Activated T-helper 2 cell treated with anti-CD3 and anti-CD28 coated beads, Interferon-gamma antibody, Interleukin-2, Interleukin-4, amounts not matched to agents 10 μg/mL and 5 μg/mL and 100 μg/mL, durations not matched to agents 14 hours and 24 hours and 36 hours (primary cell): ENCODE measurements at regions of chr14 and their contacts with region 1.

Region 1: DNA sequence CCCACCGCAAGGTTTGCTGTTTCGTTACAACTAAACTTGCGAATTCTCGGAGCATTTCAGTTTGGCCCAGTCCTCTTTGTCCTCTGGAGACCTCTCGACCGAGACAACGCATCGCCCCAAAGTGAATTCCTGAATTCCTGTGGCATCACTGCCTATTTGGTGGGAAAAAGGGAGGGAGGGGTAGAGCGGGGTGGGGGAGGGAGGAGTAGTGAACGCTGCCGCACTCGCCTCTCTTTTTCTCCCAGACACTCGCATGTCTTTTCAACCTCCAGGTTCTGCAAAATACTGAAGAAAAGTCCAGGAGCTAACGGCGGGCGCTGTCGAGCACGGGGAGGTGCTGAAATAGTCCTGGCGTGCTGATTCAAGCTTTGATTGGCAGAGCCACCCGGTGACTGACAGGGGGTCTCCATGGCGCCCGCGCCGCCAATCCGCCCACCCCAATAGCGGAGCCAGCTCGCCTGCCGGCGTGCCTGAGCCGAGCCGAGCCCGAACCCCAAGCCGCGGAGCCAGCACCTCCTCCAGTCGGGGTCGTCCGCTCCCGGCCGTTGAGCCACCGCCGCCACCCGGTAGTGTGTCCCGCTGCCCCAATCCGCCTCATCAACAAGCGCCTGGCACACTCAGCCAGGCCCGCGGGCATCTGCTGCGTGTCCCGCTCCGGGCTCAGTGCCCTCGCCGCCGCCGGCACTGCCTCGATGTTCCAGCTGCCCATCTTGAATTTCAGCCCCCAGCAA is at the start of gene SIX6:
- DNase-seq: no peak
- H3K4me3 Mint-ChIP-seq: no peak within 1 kb of the TSS
- H3K27ac Mint-ChIP-seq: peak within 1 kb of the TSS; percentile 12
- H3K4me1 Mint-ChIP-seq: no peaks in the 10 kb centered on the region
- H3K27me3 Mint-ChIP-seq: peaks cover 82% of the 10 kb centered on the region
- total RNA-seq, gene SIX6: not detected in 2 replicates

Region 2: DNA sequence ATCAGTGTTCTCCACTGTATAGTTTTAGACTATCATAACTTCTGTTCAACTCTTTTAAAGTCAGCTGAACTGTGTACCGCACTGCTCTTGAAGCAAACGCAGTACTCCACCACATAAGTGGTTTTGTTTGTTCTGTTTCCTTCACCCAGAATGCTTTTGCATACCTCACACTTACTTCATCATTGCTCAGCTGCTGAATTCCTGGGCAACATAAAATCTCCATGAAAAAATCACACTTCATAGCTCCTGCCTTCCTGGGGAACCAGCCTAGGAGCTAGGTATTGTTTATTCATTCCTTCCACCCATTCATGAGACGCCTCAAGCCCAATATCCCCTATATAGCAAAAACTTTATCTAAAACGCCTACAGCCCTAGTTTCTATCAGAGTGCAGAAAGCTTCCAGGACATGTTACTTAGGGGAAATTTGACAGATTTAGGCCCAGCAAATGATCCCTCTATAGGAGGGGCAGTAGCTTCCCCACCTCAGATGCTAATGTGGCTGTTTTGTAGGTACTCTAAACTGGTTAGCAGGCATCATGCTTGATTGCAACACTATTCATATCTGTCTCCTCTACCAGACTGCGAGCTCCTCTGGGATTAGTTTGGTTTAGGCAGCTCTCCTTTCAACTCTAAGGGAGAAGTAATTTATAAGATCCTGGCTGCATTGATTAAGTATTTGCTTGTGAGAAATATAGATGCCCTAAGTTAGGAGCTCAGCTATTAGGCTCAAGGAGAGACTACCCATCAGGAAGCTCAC is 544.4 kb before region 1 on chr14:
- intact Hi-C with region 1: no loop called
- DNase-seq: no peak
- H3K4me3 Mint-ChIP-seq: no peak overlapping the region
- H3K27ac Mint-ChIP-seq: no peak overlapping the region
- H3K4me1 Mint-ChIP-seq: peaks cover 13% of the 10 kb centered on the region
- H3K27me3 Mint-ChIP-seq: peaks cover 9% of the 10 kb centered on the region

Region 3: DNA sequence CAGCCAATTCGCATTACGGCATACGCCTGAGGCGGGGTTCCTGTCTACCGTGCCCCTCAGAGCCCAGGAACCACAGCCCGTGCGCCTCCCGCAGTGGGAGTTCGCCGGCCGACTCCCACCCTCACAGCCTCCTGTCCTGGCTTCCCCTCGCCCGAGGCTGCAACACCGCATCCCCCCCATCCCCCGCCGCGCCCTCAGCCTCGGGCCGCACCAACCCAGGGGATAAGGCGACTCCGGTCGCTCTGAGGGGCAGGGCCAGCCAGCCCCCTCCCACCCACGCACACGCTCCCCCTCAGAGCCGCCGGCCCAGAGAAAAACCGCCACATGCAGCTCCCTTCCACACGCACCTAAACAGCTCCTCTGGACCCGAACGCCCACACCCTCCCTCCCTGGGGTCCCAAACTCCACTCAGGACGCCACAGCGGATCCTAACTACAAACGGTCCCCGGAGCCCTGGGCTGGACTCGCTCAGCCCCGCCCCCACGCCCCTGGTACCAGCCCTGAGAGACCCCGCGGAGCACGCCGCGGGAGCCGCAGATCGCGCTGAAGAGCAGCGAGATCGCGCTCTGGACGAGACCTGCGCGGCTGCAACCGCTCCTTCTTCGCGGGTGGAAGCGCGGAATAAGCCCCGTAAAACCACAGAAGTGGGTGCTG is 23.1 kb before region 1 on chr14 and contains the start of gene C14orf39:
- intact Hi-C with region 1: loop called (anchors 2 kb)
- DNase-seq: no peak
- H3K4me3 Mint-ChIP-seq: no peak within 1 kb of the TSS
- H3K27ac Mint-ChIP-seq: no peak within 1 kb of the TSS
- H3K4me1 Mint-ChIP-seq: peaks cover 2% of the 10 kb centered on the region
- H3K27me3 Mint-ChIP-seq: peaks cover 21% of the 10 kb centered on the region
- total RNA-seq, gene C14orf39: not detected in 2 replicates

Region 4: DNA sequence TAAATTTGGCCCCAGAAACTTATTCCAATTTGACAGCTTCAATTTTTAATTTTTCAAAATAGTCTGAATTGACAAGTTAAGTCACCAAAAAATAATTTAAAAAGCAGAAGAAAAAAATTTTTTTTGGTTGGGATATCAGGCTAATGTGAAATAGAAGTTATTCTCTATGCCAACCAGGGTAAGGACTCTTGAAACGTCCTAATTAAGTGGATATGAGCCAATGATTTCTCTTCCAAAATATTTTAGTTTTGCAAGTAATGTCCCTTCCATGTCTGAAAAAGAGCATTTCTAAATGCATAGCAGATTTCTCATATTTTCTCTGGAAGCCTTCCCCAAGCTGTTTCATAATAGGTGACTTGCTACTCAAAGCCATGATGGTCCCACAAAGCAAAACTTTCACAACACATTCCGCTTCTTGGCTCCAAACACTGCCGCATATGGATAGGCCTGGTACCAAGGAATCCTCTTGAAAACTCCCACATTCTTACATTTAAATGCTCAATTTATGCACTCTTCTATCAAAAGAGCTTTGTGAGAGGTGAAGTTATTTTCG is 65.1 kb after region 1 on chr14:
- intact Hi-C with region 1: no loop called
- DNase-seq: no peak
- H3K4me3 Mint-ChIP-seq: no peak overlapping the region
- H3K27ac Mint-ChIP-seq: no peak overlapping the region
- H3K4me1 Mint-ChIP-seq: no peaks in the 10 kb centered on the region
- H3K27me3 Mint-ChIP-seq: peaks cover 18% of the 10 kb centered on the region

Region 5: GRCh38 chr14:60648934-60649874 is 140.3 kb after region 1 on chr14 and contains the start of gene SIX1:
- intact Hi-C with region 1: loop called (anchors 2 kb)
- DNase-seq: no peak
- H3K4me3 Mint-ChIP-seq: peak within 1 kb of the TSS; percentile 61
- H3K27ac Mint-ChIP-seq: no peak within 1 kb of the TSS
- H3K4me1 Mint-ChIP-seq: peaks cover 42% of the 10 kb centered on the region
- H3K27me3 Mint-ChIP-seq: peaks cover 85% of the 10 kb centered on the region
- total RNA-seq, gene SIX1: 0.30 and 0.48 TPM in 2 replicates

Region 6: GRCh38 chr14:60684203-60684602 is 175.3 kb after region 1 on chr14:
- intact Hi-C with region 1: no loop called
- DNase-seq: no peak
- H3K4me3 Mint-ChIP-seq: no peak overlapping the region
- H3K27ac Mint-ChIP-seq: no peak overlapping the region
- H3K4me1 Mint-ChIP-seq: peaks cover 1% of the 10 kb centered on the region
- H3K27me3 Mint-ChIP-seq: peaks cover 10% of the 10 kb centered on the region